A549 (cell line): ENCODE measurements at regions of chr16 and their contacts with region 1.

Region 1: GRCh38 chr16:67470359-67470758 is 10.6 kb downstream of the ATP6V0D1 start:
- DNase-seq: no peak
- ATAC-seq: no peak
- H3K4me3 ChIP-seq: no peak overlapping the region
- H3K27ac ChIP-seq: no peak overlapping the region
- H3K4me1 ChIP-seq: peaks cover 4% of the 10 kb centered on the region; the same call in 2 of the 3 replicates
- CTCF ChIP-seq: no peak
- EP300 ChIP-seq: no peak
- POLR2A ChIP-seq: no peak
- RAD21 ChIP-seq: no peak

Region 2: GRCh38 chr16:67415872-67416793 is 54.2 kb before region 1 on chr16 and contains the start of gene ZDHHC1:
- CTCF ChIA-PET with region 1: interaction called, 176 read pairs
- POLR2A ChIA-PET with region 1: no interaction called
- DNase-seq: peak; percentile 78 to 89
- ATAC-seq: peak; percentile 94 to 96
- H3K4me3 ChIP-seq: peak within 1 kb of the TSS; percentile 80
- H3K27ac ChIP-seq: peak within 1 kb of the TSS; percentile 91 to 96
- H3K4me1 ChIP-seq: peaks cover 9% of the 10 kb centered on the region; the same call in 2 of the 3 replicates
- CTCF ChIP-seq: peak; percentile 70
- EP300 ChIP-seq: no peak
- POLR2A ChIP-seq: peak; percentile 49; the same call in 1 of the 2 replicates
- RAD21 ChIP-seq: peak; percentile 49 to 69
- polyA plus RNA-seq, gene ZDHHC1: 3.5 and 3.8 TPM in 2 replicates

Region 3: GRCh38 chr16:67456391-67457081 is 13.8 kb before region 1 on chr16:
- CTCF ChIA-PET with region 1: interaction called, 37 read pairs
- POLR2A ChIA-PET with region 1: no interaction called
- DNase-seq: peak; percentile 34 to 58
- ATAC-seq: peak; percentile 26 to 61; a peak in 3 of 6 replicates
- H3K4me3 ChIP-seq: no peak overlapping the region
- H3K27ac ChIP-seq: no peak overlapping the region
- H3K4me1 ChIP-seq: peaks cover 11% of the 10 kb centered on the region; the same call in 1 of the 3 replicates
- CTCF ChIP-seq: no peak; the same call in 2 of the 3 replicates
- EP300 ChIP-seq: no peak
- POLR2A ChIP-seq: no peak
- RAD21 ChIP-seq: no peak

Region 4: GRCh38 chr16:67537270-67537635 is 66.9 kb after region 1 on chr16:
- CTCF ChIA-PET with region 1: no interaction called
- POLR2A ChIA-PET with region 1: no interaction called
- DNase-seq: no peak
- ATAC-seq: no peak
- H3K4me3 ChIP-seq: no peak overlapping the region
- H3K27ac ChIP-seq: no peak overlapping the region
- H3K4me1 ChIP-seq: peaks cover 12% of the 10 kb centered on the region; the same call in 1 of the 3 replicates
- CTCF ChIP-seq: no peak
- EP300 ChIP-seq: no peak
- POLR2A ChIP-seq: no peak
- RAD21 ChIP-seq: no peak